Aorta (tissue), 5 donors: ENCODE measurements at regions of chr4 and their contacts with region 1.

Region 1: GRCh38 chr4:41360214-41360920 is 103.6 kb downstream of the UCHL1 start:
- DNase-seq: peak; percentile 79 to 91
- ATAC-seq: peak; percentile 85
- H3K4me3 ChIP-seq: peak overlapping the region; percentile 52 to 86
- H3K27ac ChIP-seq: peak overlapping the region; percentile 73 to 99
- H3K4me1 ChIP-seq: peaks cover 5 to 6% of the 10 kb centered on the region in 2 donors
- H3K27me3 ChIP-seq: no peaks in the 10 kb centered on the region

Region 2: GRCh38 chr4:41405464-41406112 is 45.2 kb after region 1 on chr4:
- intact Hi-C with region 1: loop called in 1 of 2 experiments (anchors 2 kb)
- DNase-seq: no peak
- ATAC-seq: no peak
- H3K4me3 ChIP-seq: no peak overlapping the region
- H3K27ac ChIP-seq: peak overlapping the region in 1 of 2 donors; percentile 28
- H3K4me1 ChIP-seq: peaks cover 0 to 17% of the 10 kb centered on the region in 2 donors
- H3K27me3 ChIP-seq: no peaks in the 10 kb centered on the region

Region 3: GRCh38 chr4:41418444-41418843 is 58.1 kb after region 1 on chr4:
- intact Hi-C with region 1: loop called in 1 of 2 experiments (anchors 5 kb)
- DNase-seq: peak; percentile 73 to 81
- ATAC-seq: peak; percentile 68
- H3K4me3 ChIP-seq: peak overlapping the region in 1 of 2 donors; percentile 32
- H3K27ac ChIP-seq: peak overlapping the region in 1 of 2 donors; percentile 92
- H3K4me1 ChIP-seq: peaks cover 0 to 3% of the 10 kb centered on the region in 2 donors
- H3K27me3 ChIP-seq: no peaks in the 10 kb centered on the region

Region 4: DNA sequence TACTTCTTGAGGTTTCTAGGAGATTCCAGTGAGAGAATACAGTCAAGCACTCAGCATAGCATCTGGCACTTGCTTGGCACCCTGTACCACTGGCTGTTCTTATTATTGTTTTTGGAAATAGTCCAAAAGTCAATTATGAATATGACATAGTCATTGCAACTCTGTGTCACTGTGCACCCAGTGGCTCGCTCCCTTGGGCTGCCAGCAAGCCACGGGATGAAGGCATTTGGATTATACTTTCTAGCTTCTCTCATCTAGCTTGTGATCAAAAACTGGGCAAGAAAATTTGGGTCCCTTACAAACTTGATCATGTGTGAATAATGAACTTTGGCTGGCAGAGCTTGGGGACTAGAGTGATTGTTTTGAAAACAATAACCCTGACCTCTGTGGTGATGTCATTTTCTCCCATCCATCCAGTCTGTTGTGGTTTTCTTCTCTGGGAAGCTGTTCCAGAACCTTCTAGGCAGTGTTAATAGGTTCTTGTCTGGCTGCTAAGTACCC is 144.8 kb after region 1 on chr4:
- intact Hi-C with region 1: loop called in 1 of 2 experiments (anchors 5 kb)
- DNase-seq: peak; percentile 77 to 80
- ATAC-seq: peak; percentile 79
- H3K4me3 ChIP-seq: no peak overlapping the region
- H3K27ac ChIP-seq: peak overlapping the region in 1 of 2 donors; percentile 64
- H3K4me1 ChIP-seq: peaks cover 5 to 27% of the 10 kb centered on the region in 2 donors
- H3K27me3 ChIP-seq: no peaks in the 10 kb centered on the region

Region 5: GRCh38 chr4:41538017-41538733 is 177.8 kb after region 1 on chr4 and contains the start of gene LIMCH1:
- intact Hi-C with region 1: loop called (anchors 2 to 5 kb)
- DNase-seq: peak; percentile 87 to 91
- ATAC-seq: peak; percentile 78
- H3K4me3 ChIP-seq: peak within 1 kb of the TSS in 1 of 2 donors; percentile 63
- H3K27ac ChIP-seq: peak within 1 kb of the TSS; percentile 63 to 93
- H3K4me1 ChIP-seq: peaks cover 11 to 15% of the 10 kb centered on the region in 2 donors
- H3K27me3 ChIP-seq: no peaks in the 10 kb centered on the region
- total RNA-seq, gene LIMCH1: 177 to 191 TPM

Region 6: GRCh38 chr4:41644288-41644914 is 284.0 kb after region 1 on chr4:
- intact Hi-C with region 1: loop called (anchors 5 kb)
- DNase-seq: peak; percentile 80 to 94
- ATAC-seq: peak; percentile 90
- H3K4me3 ChIP-seq: no peak overlapping the region
- H3K27ac ChIP-seq: no peak overlapping the region
- H3K4me1 ChIP-seq: peaks cover 2 to 3% of the 10 kb centered on the region in 2 donors
- H3K27me3 ChIP-seq: no peaks in the 10 kb centered on the region